ENCODE measurements at regions of chr12 and their contacts with region 1.

Region 1: DNA sequence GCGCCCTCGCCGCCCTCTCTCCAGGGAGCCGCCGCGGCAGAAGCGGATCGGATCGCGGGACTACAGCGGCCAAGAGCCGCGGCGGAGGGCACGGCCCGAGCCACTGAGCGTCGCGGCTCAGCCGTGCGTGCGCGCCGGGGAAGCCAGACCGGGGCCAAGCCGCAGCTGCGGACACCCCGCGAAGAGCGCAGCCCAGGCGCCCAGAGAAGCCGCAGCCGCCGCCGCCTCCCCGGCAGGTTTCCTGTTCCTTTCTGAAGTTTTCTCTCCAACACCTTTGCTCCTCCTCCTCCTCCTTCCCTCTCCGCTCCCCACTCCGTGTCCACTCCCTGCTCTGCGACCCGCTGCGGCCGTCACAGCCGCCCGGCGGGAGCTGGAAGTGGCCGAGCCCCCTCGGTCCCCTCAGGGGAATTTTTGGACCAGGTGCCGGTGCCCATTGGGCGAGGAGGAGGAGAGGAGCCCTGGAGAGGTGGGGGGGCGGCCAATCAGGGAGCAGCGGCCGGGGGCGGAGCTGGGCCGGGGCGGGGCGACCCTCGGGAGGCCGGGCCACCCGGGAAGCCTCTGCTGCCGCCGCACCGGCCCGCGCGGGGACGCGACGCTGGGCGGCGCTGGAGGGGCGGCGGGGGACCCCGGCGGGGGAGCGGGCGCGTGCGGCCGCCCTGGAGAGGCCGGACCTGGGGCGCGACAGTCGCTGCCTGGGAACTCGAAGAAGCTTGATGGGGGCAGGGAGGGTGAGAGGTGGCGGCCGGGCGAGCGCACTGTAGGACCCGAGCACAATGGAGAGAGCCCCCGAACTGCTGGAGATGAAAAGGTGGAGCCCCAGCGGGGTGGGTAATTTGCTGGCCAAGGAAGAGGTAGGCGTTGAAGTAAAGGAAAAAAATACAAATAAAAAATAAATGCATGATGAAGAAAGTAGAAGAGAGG is at the start of gene ITPR2:
- DNase-seq: peak; percentile 88 to 93 (median 90)
- H3K4me3 ChIP-seq: peak within 1 kb of the TSS; percentile 79
- H3K4me3 Mint-ChIP-seq: peak within 1 kb of the TSS; percentile 94 to 100 (median 97)
- H3K27ac ChIP-seq: peak within 1 kb of the TSS; percentile 85
- H3K27ac Mint-ChIP-seq: peak within 1 kb of the TSS; percentile 94 to 100 (median 98)
- H3K4me1 ChIP-seq: peaks cover 20% of the 10 kb centered on the region
- H3K4me1 Mint-ChIP-seq: peaks cover 42 to 50% (median 50%) of the 10 kb centered on the region in 3 donors
- H3K27me3 ChIP-seq: no peaks in the 10 kb centered on the region
- H3K27me3 Mint-ChIP-seq: no peaks in the 10 kb centered on the region
- total RNA-seq, gene ITPR2: 24.0 to 29.4 TPM

Region 2: GRCh38 chr12:26817183-26817591 is 15.9 kb before region 1 on chr12:
- CTCF ChIA-PET with region 1: interaction called, 10 read pairs
- POLR2A ChIA-PET with region 1: interaction called, 5 read pairs
- DNase-seq: no peak
- H3K4me3 ChIP-seq: no peak overlapping the region
- H3K4me3 Mint-ChIP-seq: no peak overlapping the region
- H3K27ac ChIP-seq: no peak overlapping the region
- H3K27ac Mint-ChIP-seq: peak overlapping the region in 2 of 8 donors; percentile 40 to 53
- H3K4me1 ChIP-seq: no peaks in the 10 kb centered on the region
- H3K4me1 Mint-ChIP-seq: peaks cover 6 to 26% (median 16%) of the 10 kb centered on the region in 3 donors
- H3K27me3 ChIP-seq: no peaks in the 10 kb centered on the region
- H3K27me3 Mint-ChIP-seq: no peaks in the 10 kb centered on the region

Region 3: GRCh38 chr12:26863502-26863901 is 30.4 kb after region 1 on chr12:
- CTCF ChIA-PET with region 1: interaction called, 10 read pairs
- POLR2A ChIA-PET with region 1: no interaction called
- DNase-seq: no peak
- H3K4me3 ChIP-seq: no peak overlapping the region
- H3K4me3 Mint-ChIP-seq: no peak overlapping the region
- H3K27ac ChIP-seq: no peak overlapping the region
- H3K27ac Mint-ChIP-seq: no peak overlapping the region
- H3K4me1 ChIP-seq: peaks cover 5% of the 10 kb centered on the region
- H3K4me1 Mint-ChIP-seq: peaks cover 10 to 13% (median 12%) of the 10 kb centered on the region in 3 donors
- H3K27me3 ChIP-seq: no peaks in the 10 kb centered on the region
- H3K27me3 Mint-ChIP-seq: peaks cover 11% of the 10 kb centered on the region in 2 donors

Region 4: DNA sequence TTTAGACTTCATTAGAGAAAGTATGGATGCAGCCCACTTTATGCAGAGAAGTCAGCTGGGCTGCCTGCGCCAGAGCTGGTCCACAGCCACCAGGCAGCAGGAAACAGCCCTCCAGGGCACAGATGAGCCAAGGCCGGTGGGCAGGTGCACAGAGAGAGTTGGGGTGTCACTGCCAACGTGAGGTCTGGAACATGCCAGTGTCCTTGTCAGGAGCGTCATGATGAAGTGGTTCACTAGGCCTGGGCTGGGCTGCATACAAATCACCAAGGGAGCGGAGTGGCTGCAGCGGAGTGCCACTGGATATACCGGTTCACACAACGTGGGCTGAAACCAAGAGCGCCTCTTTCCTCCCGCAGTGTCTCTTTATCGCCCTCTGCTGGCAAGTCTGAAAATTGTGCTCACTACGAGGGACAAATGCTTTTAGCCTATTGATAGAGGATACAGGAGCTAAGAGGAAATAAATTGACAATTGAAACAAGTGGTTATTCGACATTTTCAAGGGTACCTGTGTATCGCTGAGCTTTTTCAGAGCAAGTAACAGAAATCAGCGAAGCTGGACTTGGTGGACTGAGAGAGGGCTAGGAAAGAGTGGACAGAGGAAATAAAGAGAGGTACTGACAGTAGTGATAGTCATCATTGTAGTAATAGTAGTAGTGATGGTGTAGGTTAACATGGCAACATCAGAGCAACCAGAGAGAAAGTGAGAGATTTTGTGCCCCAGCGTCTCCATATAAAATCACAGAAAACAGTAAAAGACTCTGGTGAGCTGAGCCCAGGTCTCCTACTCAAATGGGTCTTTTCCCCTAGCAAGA is 51.9 kb after region 1 on chr12:
- CTCF ChIA-PET with region 1: interaction called, 13 read pairs
- POLR2A ChIA-PET with region 1: no interaction called
- DNase-seq: peak; percentile 71 to 86 (median 76)
- H3K4me3 ChIP-seq: peak overlapping the region; percentile 31
- H3K4me3 Mint-ChIP-seq: peak overlapping the region in 6 of 7 donors; percentile 50 to 81 (median 74)
- H3K27ac ChIP-seq: no peak overlapping the region
- H3K27ac Mint-ChIP-seq: peak overlapping the region in 1 of 8 donors; percentile 21
- H3K4me1 ChIP-seq: no peaks in the 10 kb centered on the region
- H3K4me1 Mint-ChIP-seq: peaks cover 8 to 9% (median 8%) of the 10 kb centered on the region in 3 donors
- H3K27me3 ChIP-seq: no peaks in the 10 kb centered on the region
- H3K27me3 Mint-ChIP-seq: peaks cover 9 to 11% of the 10 kb centered on the region in 2 donors